Aorta (tissue), 5 donors: ENCODE measurements at regions of chr9 and their contacts with region 1.

Region 1: GRCh38 chr9:13351778-13352386 is 72.4 kb upstream of the MPDZ start:
- DNase-seq: no peak
- ATAC-seq: no peak
- H3K4me3 ChIP-seq: no peak overlapping the region
- H3K27ac ChIP-seq: no peak overlapping the region
- H3K4me1 ChIP-seq: no peaks in the 10 kb centered on the region
- H3K27me3 ChIP-seq: no peaks in the 10 kb centered on the region

Region 2: GRCh38 chr9:12972608-12973589 is 379.0 kb before region 1 on chr9:
- intact Hi-C with region 1: no loop called
- DNase-seq: no peak
- ATAC-seq: peak; percentile 36
- H3K4me3 ChIP-seq: no peak overlapping the region
- H3K27ac ChIP-seq: no peak overlapping the region
- H3K4me1 ChIP-seq: no peaks in the 10 kb centered on the region
- H3K27me3 ChIP-seq: no peaks in the 10 kb centered on the region

Region 3: GRCh38 chr9:14159440-14160216 is 807.7 kb after region 1 on chr9:
- intact Hi-C with region 1: no loop called
- DNase-seq: no peak
- ATAC-seq: no peak
- H3K4me3 ChIP-seq: no peak overlapping the region
- H3K27ac ChIP-seq: no peak overlapping the region
- H3K4me1 ChIP-seq: peaks cover 2% of the 10 kb centered on the region in 2 donors
- H3K27me3 ChIP-seq: no peaks in the 10 kb centered on the region

Region 4: DNA sequence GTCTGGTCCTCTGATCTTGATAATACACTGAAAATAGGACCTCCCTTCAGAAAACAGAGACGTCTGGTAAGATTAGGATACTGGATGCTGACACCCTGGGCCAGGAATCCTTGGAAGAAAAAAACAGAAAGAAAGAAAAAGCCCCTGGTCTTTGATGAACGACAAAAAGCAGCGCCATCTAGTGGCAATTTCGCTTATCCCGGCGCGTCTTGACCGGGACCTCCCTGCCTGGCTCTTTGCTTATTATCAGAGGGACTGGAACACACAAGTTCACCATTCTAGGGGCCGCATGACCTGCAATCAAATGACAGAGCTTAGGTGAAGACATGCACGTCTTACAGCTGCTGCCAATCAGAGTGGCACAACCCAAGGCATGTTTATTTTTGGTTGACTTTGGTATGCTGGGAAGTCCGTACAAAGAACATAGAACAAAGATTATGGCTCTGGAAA is 1076.9 kb after region 1 on chr9:
- intact Hi-C with region 1: loop called (anchors 5 kb)
- DNase-seq: peak; percentile 76 to 89
- ATAC-seq: peak; percentile 51
- H3K4me3 ChIP-seq: no peak overlapping the region
- H3K27ac ChIP-seq: no peak overlapping the region
- H3K4me1 ChIP-seq: peaks cover 2 to 3% of the 10 kb centered on the region in 2 donors
- H3K27me3 ChIP-seq: no peaks in the 10 kb centered on the region